WTC11 (cell line): ENCODE measurements at regions of chr17 and their contacts with region 1.

Region 1: DNA sequence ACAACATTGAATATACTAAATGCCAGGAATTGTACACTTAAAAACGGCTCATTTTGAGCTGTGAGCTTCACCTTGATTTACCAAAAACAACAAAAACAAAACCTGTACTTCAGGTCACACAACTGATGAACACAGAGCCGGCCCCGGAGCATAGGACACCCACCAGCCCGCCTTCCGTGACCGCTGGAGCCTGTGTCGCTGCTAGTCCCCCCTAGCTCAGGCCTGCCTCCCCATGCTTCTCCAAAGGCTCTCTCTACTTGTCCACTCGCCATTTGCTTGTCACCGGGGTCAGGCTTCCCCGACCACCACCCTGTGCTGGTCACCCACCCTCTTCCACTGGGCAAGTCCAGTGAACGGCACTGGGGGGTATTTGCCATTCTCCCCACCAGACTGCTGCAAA is 113.8 kb upstream of the TNRC6C start:
- DNase-seq: no peak
- ATAC-seq: no peak
- H3K4me3 Mint-ChIP-seq: no peak overlapping the region
- H3K27ac Mint-ChIP-seq: no peak overlapping the region
- H3K4me1 Mint-ChIP-seq: peaks cover 27% of the 10 kb centered on the region
- H3K27me3 Mint-ChIP-seq: no peaks in the 10 kb centered on the region; the same call in 1 of the 2 replicates
- CTCF ChIP-seq: no peak

Region 2: DNA sequence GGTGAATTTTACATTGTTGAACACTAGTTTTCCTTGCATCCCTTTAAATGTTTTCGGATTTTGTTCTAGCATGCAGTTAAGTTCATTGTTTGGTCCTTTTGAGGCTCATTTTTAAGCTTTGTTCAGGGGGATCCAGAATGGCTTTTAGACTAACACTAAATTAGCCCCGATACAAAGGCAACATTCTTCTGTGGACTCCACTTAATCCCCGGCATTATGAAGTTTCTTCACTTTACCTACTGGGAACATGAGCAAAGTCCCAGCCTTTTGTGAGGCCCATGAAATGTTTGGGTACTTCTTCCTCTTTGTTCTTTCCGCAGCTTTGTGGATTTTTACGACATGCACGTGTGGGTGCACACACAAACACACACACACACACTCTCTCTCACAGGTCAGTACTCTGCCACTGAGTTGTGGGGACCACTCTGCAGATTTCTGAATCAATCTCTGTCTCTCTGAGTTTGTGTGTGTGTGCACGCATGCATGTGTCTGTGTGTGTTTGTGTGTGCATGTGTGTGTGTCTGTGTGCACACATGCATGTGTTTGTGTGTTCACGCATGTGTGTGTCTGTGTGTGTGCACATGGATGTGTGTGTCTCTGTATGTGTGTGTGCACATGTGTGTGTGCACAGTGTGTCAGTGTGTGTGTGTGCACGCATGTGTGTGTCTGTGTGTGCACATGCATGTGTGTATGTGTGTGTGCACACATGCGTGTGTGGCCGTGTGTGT is 126.6 kb before region 1 on chr17:
- CTCF ChIA-PET with region 1: no interaction called
- POLR2A ChIA-PET with region 1: no interaction called
- DNase-seq: no peak
- ATAC-seq: no peak
- H3K4me3 Mint-ChIP-seq: no peak overlapping the region; the same call in 1 of the 2 replicates
- H3K27ac Mint-ChIP-seq: peak overlapping the region; percentile 87
- H3K4me1 Mint-ChIP-seq: peaks cover 29% of the 10 kb centered on the region
- H3K27me3 Mint-ChIP-seq: peaks cover 2% of the 10 kb centered on the region
- CTCF ChIP-seq: no peak

Region 3: GRCh38 chr17:77834170-77835115 is 10.2 kb before region 1 on chr17:
- CTCF ChIA-PET with region 1: no interaction called
- POLR2A ChIA-PET with region 1: no interaction called
- DNase-seq: no peak
- ATAC-seq: peak; percentile 81
- H3K4me3 Mint-ChIP-seq: no peak overlapping the region
- H3K27ac Mint-ChIP-seq: 0 out of 2 replicates have a peak overlapping the region, but pooled peaks have one; percentile 53
- H3K4me1 Mint-ChIP-seq: peaks cover 46% of the 10 kb centered on the region
- H3K27me3 Mint-ChIP-seq: no peaks in the 10 kb centered on the region
- CTCF ChIP-seq: no peak

Region 4: GRCh38 chr17:77863814-77864161 is 19.1 kb after region 1 on chr17:
- CTCF ChIA-PET with region 1: interaction called, 3 read pairs
- POLR2A ChIA-PET with region 1: interaction called, 13 read pairs
- DNase-seq: no peak
- ATAC-seq: no peak
- H3K4me3 Mint-ChIP-seq: no peak overlapping the region
- H3K27ac Mint-ChIP-seq: no peak overlapping the region
- H3K4me1 Mint-ChIP-seq: peaks cover 23% of the 10 kb centered on the region
- H3K27me3 Mint-ChIP-seq: no peaks in the 10 kb centered on the region; the same call in 1 of the 2 replicates
- CTCF ChIP-seq: no peak